Activated CD4-positive, alpha-beta memory T cell treated with anti-CD3 and anti-CD28 coated beads for 36 hours (primary cell): ENCODE measurements at regions of chr11 and their contacts with region 1.

Region 1: GRCh38 chr11:67401495-67402191 is at the start of gene PPP1CA:
- DNase-seq: peak; percentile 95
- H3K4me3 Mint-ChIP-seq: peak within 1 kb of the TSS; percentile 87
- H3K27ac Mint-ChIP-seq: peak within 1 kb of the TSS; percentile 93
- H3K4me1 Mint-ChIP-seq: peaks cover 64% of the 10 kb centered on the region
- H3K27me3 Mint-ChIP-seq: no peaks in the 10 kb centered on the region
- total RNA-seq, gene PPP1CA: 261 to 267 TPM

Region 2: GRCh38 chr11:67391304-67392132 is 10.1 kb before region 1 on chr11 and contains the start of gene RAD9A:
- CTCF ChIA-PET with region 1: interaction called, 28 read pairs
- POLR2A ChIA-PET with region 1: interaction called, 38 read pairs
- intact Hi-C with region 1: no loop called
- DNase-seq: peak; percentile 95
- H3K4me3 Mint-ChIP-seq: peak within 1 kb of the TSS; percentile 92
- H3K27ac Mint-ChIP-seq: peak within 1 kb of the TSS; percentile 76
- H3K4me1 Mint-ChIP-seq: peaks cover 33% of the 10 kb centered on the region
- H3K27me3 Mint-ChIP-seq: no peaks in the 10 kb centered on the region
- total RNA-seq, gene RAD9A: 31.0 to 39.1 TPM

Region 3: DNA sequence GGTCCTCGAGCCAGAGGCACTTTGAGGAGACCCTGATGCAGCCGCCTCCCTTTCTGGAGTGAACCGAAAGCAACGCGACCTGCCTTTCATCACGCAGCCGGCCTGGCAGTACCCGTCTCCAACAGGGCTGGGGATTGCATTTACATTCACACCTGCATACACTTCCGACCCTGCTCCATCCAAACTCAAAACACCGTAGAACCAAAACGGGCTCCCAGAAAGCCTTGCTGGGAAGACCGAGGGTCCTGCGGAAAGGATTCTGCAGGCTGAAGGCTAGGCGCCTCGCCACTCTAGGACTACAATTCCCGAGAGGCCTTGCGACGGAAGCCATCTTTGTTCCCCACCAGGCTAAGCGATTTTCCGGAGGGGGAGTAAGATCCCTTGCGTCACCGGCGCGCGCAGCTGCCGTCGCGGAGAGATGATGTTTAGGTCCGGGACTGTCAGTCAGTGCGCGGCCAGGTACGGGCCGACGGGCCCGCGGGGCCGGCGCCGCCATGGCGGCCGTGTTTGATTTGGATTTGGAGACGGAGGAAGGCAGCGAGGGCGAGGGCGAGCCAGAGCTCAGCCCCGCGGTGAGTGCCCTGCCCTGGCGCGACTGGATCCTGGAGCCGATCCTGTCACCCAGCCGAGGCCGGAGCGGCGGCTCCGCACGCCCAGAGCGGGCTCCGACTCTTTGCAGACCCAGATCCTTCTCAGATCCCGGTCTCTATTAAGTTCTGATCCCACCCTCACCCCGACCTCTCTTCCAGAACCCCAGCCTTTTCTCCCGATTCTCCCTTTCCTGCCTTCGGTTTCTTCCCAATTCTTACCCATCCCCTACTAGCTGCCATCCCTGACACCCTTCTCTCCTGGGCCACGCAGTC is 26.6 kb after region 1 on chr11 and contains the start of gene RPS6KB2:
- CTCF ChIA-PET with region 1: interaction called, 8 read pairs
- POLR2A ChIA-PET with region 1: interaction called, 10 read pairs
- intact Hi-C with region 1: loop called (anchors 2 kb)
- DNase-seq: peak; percentile 100
- H3K4me3 Mint-ChIP-seq: peak within 1 kb of the TSS; percentile 91
- H3K27ac Mint-ChIP-seq: peak within 1 kb of the TSS; percentile 91
- H3K4me1 Mint-ChIP-seq: peaks cover 32% of the 10 kb centered on the region
- H3K27me3 Mint-ChIP-seq: no peaks in the 10 kb centered on the region
- total RNA-seq, gene RPS6KB2: 57.4 to 57.5 TPM

Region 4: DNA sequence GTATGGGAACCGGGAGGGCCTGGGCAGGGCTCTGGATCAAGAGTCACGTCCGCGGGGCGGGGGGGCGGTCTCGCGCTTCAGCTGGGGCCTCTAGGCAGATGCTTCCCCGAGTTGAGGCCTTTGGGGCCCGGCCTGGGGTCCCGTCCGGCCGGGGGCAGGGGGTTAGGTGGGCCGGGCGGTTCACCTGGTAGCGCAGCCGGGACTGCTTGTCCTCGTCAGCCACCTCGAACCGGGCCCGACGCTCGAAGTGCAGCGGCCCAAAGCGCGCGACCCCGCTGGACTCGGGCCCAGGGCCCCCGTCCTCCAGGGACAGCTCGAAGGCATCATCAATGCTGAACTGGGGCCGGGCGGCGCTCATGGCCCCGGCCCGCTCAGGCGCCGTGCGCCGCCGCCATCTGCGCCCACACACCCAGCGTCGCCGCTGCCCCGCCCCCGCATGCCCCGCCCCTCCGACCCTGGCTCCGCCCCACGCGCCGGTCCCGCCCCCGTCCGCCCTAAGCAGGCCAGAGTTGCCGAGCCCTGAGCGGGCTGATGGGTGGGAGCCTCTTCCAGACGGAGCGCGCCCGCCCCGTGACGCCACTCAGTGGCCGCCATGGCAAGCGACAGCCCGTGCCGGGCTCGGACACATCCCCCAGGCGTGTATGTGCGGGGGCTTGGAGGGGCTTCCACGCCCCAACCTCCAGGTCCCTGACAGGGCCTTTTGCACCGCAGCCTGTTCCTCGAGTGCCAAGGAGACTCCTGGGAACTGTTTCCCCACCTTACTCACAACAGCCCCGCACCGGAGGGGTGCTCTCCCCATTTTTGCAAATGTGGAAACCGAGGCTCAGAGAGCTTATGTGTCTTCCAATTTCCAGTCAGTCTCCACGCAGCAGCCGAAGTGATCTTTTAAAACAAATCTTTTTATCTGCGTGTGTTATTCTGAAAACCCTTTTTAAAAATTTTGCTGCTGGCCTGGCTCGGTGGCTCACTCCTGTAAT is 67.5 kb after region 1 on chr11 and contains the start of gene TMEM134:
- CTCF ChIA-PET with region 1: interaction called, 17 read pairs
- POLR2A ChIA-PET with region 1: interaction called, 9 read pairs
- intact Hi-C with region 1: loop called (anchors 1 kb)
- DNase-seq: peak; percentile 95
- H3K4me3 Mint-ChIP-seq: peak within 1 kb of the TSS; percentile 90
- H3K27ac Mint-ChIP-seq: peak within 1 kb of the TSS; percentile 90
- H3K4me1 Mint-ChIP-seq: peaks cover 30% of the 10 kb centered on the region
- H3K27me3 Mint-ChIP-seq: no peaks in the 10 kb centered on the region
- total RNA-seq, gene TMEM134: 68.2 to 75.2 TPM

Region 5: DNA sequence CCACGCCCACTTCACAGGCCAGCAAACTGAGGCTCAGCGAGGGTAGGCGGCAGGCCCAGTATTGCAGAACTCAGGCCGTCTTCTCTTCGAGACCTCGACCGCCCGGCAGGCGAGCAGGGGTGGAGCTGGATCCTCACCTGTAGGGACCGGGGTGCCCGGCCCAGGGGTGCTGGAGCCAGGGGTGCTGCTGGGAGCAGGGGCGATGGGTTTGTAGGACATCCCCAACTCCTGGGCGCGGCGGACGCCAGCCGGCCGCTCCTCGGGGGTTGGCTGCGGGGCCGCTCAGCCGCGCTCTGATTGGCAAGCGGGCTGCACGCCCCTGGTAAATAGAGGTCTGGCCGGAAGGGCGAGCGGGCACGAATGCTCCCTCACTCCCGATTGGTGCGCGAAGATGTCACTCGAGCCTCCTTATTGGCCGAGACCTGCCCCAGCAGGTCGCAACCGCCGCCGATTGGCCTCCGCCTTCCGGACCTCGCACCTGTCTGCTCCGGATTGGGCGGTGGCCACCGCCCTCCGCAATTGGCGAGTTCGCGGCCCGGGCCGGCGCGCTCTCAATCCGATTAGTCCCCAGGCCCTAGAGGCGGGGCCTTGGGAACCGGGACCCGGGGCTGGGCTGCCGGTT is 106.3 kb after region 1 on chr11 and contains the start of gene CDK2AP2:
- CTCF ChIA-PET with region 1: interaction called, 18 read pairs
- POLR2A ChIA-PET with region 1: interaction called, 3 read pairs
- intact Hi-C with region 1: loop called (anchors 1 kb)
- DNase-seq: peak; percentile 99
- H3K4me3 Mint-ChIP-seq: peak within 1 kb of the TSS; percentile 90
- H3K27ac Mint-ChIP-seq: peak within 1 kb of the TSS; percentile 98
- H3K4me1 Mint-ChIP-seq: peaks cover 30% of the 10 kb centered on the region
- H3K27me3 Mint-ChIP-seq: no peaks in the 10 kb centered on the region
- total RNA-seq, gene CDK2AP2: 82.7 to 84.7 TPM